ENCODE measurements at regions of chr2 and their contacts with region 1.

Region 1: DNA sequence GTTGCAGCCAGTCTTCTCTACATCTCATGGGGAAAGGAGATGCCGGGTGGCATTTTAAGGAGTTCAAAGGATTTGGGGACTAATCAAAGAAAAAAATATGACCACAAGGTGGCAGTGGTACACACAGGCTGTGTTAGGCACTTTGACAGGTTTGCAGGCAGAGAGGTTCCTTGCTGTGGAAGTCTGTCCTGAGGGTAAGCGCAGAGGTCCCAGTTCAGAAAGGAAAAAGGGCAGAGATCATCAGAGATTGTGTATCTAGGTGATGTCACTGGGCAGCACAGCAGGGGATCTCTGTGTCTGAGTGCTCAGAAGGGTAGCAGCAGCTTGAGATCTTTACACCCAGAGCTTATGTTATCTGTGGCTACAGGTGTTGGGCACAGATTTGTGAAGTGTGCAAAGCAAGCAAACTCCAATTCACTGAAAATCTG is 231.4 kb downstream of the LRRTM1 start:
- DNase-seq: peak in 2 of 4 donors; percentile 70 to 77
- ATAC-seq: peak; percentile 86
- H3K4me3 ChIP-seq: no peak overlapping the region
- H3K27ac ChIP-seq: no peak overlapping the region
- H3K4me1 ChIP-seq: no peaks in the 10 kb centered on the region
- H3K27me3 ChIP-seq: no peaks in the 10 kb centered on the region
- CTCF ChIP-seq: peak; percentile 41 to 59

Region 2: DNA sequence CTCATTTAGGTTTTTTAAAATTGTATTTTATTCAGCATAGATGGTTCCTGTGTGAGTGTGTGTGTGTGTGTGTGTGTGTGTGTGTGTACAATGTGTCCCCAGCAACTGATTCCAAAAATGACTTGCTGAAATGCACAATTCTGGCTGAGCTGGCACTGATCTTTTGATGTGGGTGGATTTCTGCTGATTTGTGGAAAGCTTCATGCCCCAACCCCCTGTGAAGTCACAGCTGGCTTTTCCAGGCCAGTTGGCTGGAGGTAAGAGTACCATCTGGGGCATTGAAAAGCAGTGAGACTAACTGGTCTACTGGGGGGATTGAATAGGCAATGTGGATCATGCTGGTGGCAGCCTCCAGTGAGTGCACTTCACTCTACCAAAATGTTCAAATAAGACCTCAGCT is 44.3 kb after region 1 on chr2:
- intact Hi-C with region 1: no loop called
- DNase-seq: no peak
- ATAC-seq: no peak
- H3K4me3 ChIP-seq: no peak overlapping the region
- H3K27ac ChIP-seq: no peak overlapping the region
- H3K4me1 ChIP-seq: no peaks in the 10 kb centered on the region
- H3K27me3 ChIP-seq: no peaks in the 10 kb centered on the region
- CTCF ChIP-seq: no peak

Region 3: GRCh38 chr2:80238692-80239469 is 165.7 kb after region 1 on chr2:
- intact Hi-C with region 1: loop called in 1 of 2 experiments (anchors 5 kb)
- DNase-seq: peak in 1 of 4 donors; percentile 7
- ATAC-seq: peak; percentile 71
- H3K4me3 ChIP-seq: no peak overlapping the region
- H3K27ac ChIP-seq: no peak overlapping the region
- H3K4me1 ChIP-seq: no peaks in the 10 kb centered on the region
- H3K27me3 ChIP-seq: no peaks in the 10 kb centered on the region
- CTCF ChIP-seq: peak; percentile 73 to 76

Measured in left lung (tissue), 14 donors.